Body of pancreas (tissue), 4 donors: ENCODE measurements at regions of chr3 and their contacts with region 1.

Region 1: DNA sequence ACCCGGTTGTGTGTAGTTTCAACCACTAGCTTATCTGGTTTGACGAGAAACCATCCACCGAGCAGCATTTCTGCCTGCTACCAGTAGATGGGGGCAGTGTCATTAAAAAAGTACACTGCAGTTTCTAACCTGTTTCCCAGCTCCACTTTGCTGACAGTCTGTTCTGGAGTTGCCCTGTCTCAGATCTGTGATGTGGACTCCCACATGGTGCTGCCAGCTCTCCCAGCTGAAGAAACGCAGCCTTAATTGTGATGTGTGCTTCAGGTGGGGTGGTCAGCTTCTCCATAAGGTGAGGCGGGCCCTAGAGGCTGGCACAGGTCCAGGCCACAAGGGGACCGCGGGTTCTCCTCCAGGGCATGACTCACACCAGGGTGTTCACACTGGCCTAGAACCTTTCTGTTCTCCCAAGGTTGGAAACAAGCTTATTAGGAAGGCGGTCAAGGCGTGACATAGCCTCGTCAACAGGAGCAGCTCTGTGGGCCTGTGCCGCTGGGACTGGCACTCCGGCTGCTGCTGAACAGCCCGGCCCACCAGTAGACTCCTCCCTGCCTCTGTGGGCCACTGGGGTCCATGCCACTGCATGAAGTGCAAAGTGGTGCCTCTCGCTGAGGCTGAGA is 2.9 kb upstream of the FAM43A start:
- DNase-seq: peak; percentile 78 to 84 (median 82)
- ATAC-seq: peak; percentile 86
- H3K4me3 ChIP-seq: no peak overlapping the region
- H3K27ac ChIP-seq: no peak overlapping the region
- H3K4me1 ChIP-seq: peaks cover 28% of the 10 kb centered on the region
- H3K27me3 ChIP-seq: peaks cover 0 to 13% of the 10 kb centered on the region in 2 donors
- CTCF ChIP-seq: peak; percentile 70 to 97 (median 94)
- POLR2A ChIP-seq: no peak

Region 2: DNA sequence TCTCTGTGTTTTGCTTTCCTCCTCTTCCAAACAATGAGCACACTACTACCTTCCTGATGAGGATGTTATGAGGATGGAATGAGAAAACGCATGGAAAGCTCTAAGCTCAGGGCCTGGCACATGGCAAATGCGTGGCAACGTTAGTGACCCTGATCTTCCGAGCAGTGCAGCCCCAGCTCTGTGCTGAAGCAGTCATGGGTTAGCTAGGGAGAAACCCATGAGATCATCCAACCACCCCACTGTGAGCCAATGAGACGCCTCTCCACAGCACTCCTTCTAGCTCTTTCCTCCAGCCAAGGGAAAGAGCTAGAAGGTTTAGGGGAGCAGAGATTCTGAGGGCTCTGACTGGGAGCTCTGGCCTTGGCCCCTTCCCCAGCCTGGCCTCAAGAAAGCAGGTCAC is 336.2 kb before region 1 on chr3:
- intact Hi-C with region 1: no loop called
- DNase-seq: no peak
- ATAC-seq: no peak
- H3K4me3 ChIP-seq: no peak overlapping the region
- H3K27ac ChIP-seq: no peak overlapping the region
- H3K4me1 ChIP-seq: no peaks in the 10 kb centered on the region
- H3K27me3 ChIP-seq: no peaks in the 10 kb centered on the region
- CTCF ChIP-seq: no peak
- POLR2A ChIP-seq: no peak

Region 3: GRCh38 chr3:195106418-195106906 is 423.7 kb after region 1 on chr3:
- intact Hi-C with region 1: loop called (anchors 5 kb)
- DNase-seq: peak; percentile 42 to 64 (median 54)
- ATAC-seq: peak; percentile 64
- H3K4me3 ChIP-seq: no peak overlapping the region
- H3K27ac ChIP-seq: no peak overlapping the region
- H3K4me1 ChIP-seq: peaks cover 8% of the 10 kb centered on the region
- H3K27me3 ChIP-seq: no peaks in the 10 kb centered on the region
- CTCF ChIP-seq: peak; percentile 87 to 100 (median 93)
- POLR2A ChIP-seq: no peak

Region 4: GRCh38 chr3:195259475-195260279 is 576.9 kb after region 1 on chr3:
- intact Hi-C with region 1: loop called (anchors 5 kb)
- DNase-seq: peak; percentile 75 to 87 (median 80)
- ATAC-seq: peak; percentile 87
- H3K4me3 ChIP-seq: peak overlapping the region in 1 of 2 donors; percentile 32
- H3K27ac ChIP-seq: peak overlapping the region; percentile 57 to 85 (median 70)
- H3K4me1 ChIP-seq: peaks cover 19% of the 10 kb centered on the region
- H3K27me3 ChIP-seq: no peaks in the 10 kb centered on the region
- CTCF ChIP-seq: peak in 6 of 7 experiments; percentile 25 to 99 (median 96)
- POLR2A ChIP-seq: peak in 2 of 3 donors; percentile 54 to 60